ENCODE measurements at regions of chr11 and their contacts with region 1.

Region 1: DNA sequence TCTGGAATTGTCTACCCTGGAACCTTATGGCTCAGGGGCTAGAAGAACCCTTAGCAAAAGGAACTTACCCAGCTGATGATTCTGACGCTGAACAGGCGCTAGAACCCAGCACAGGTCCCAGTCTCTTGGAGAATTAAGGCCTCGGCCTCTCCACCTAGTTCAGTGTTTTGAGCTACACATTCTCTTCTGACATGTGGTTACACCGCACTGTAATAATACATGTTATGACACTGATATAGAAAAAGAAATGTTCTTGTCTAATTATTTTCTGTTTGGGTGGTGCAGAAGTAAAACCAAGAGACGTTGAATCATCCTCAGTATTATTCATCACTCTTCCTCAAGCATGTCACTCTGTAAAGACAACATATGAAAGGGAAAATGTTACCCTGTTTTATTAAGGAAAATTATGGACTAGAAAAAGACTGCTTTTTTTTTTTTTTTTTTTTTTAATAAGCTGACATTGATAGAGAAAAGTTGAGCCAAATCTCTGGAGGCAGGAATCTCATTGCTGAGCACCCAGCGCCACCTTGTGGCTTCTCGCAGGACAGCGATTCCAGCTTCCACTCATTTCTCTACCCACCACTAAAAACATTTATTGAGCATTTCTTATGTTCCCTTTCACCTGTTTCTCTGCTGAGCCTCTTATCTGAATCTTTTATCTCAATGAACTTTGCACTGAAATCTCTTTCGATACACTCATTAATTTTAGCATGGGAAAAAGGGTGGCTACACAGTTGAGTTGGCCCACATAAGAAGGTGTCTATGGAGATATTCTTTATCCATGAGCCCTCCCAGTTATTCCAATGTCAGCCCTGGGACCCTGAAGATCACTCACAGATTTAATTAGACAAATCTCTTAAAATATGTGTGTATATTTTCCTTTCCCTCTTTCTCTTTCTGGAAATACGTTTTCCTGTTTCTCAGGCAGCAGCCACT is 12.6 kb upstream of the APLNR start:
- DNase-seq: no peak
- H3K4me3 ChIP-seq: peak overlapping the region in 1 of 2 experiments; percentile 21; a peak in 1 of 4 replicates
- H3K27ac ChIP-seq: peak overlapping the region in 1 of 2 experiments; percentile 94; a peak in 2 of 4 replicates
- H3K4me1 ChIP-seq: peaks cover 0 to 15% of the 10 kb centered on the region in 2 experiments; a peak in 1 of 4 replicates
- H3K27me3 ChIP-seq: no peaks in the 10 kb centered on the region; the same call in 1 of the 2 replicates
- CTCF ChIP-seq: peak; percentile 89
- EP300 ChIP-seq: no peak
- RAD21 ChIP-seq: peak; percentile 96

Region 2: GRCh38 chr11:56841210-56841810 is 408.3 kb before region 1 on chr11:
- CTCF ChIA-PET with region 1: interaction called, 491 read pairs
- POLR2A ChIA-PET with region 1: interaction called, 3 read pairs
- DNase-seq: peak; percentile 60
- H3K4me3 ChIP-seq: no peak overlapping the region; a peak in 1 of 4 replicates
- H3K27ac ChIP-seq: peak overlapping the region in 1 of 2 experiments; percentile 94; a peak in 2 of 4 replicates
- H3K4me1 ChIP-seq: peaks cover 0 to 4% of the 10 kb centered on the region in 2 experiments; a peak in 2 of 4 replicates
- H3K27me3 ChIP-seq: no peaks in the 10 kb centered on the region
- CTCF ChIP-seq: peak; percentile 79
- EP300 ChIP-seq: no peak
- RAD21 ChIP-seq: peak; percentile 96

Region 3: DNA sequence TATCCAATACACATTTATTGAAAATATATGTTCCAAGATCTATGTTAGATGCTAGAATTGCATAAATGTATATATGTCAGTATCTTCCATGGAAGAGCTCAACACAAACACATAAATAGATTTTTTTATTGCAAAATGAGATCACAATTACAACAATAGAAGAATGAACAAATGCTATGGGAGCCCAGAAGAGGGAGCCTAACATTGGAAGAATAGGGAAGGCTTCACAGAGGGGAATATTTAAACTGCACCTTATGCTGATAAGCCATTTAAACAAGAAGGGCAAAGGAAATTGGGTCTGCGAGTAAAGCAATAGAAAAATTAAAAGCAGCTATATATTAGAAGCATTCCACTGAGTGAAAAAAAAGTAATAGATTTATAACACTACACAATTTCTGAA is 164.0 kb before region 1 on chr11:
- CTCF ChIA-PET with region 1: interaction called, 10 read pairs
- POLR2A ChIA-PET with region 1: no interaction called
- DNase-seq: no peak
- H3K4me3 ChIP-seq: no peak overlapping the region
- H3K27ac ChIP-seq: no peak overlapping the region
- H3K4me1 ChIP-seq: no peaks in the 10 kb centered on the region
- H3K27me3 ChIP-seq: no peaks in the 10 kb centered on the region; the same call in 1 of the 2 replicates
- CTCF ChIP-seq: peak; percentile 44
- EP300 ChIP-seq: no peak
- RAD21 ChIP-seq: peak; percentile 47

Region 4: GRCh38 chr11:57131080-57131790 is 118.4 kb before region 1 on chr11:
- CTCF ChIA-PET with region 1: interaction called, 128 read pairs
- POLR2A ChIA-PET with region 1: no interaction called
- DNase-seq: peak; percentile 25
- H3K4me3 ChIP-seq: peak overlapping the region in 1 of 2 experiments; percentile 54; a peak in 1 of 4 replicates
- H3K27ac ChIP-seq: peak overlapping the region in 1 of 2 experiments; percentile 39; a peak in 1 of 4 replicates
- H3K4me1 ChIP-seq: peaks cover 0 to 3% of the 10 kb centered on the region in 2 experiments; a peak in 1 of 4 replicates
- H3K27me3 ChIP-seq: no peaks in the 10 kb centered on the region
- CTCF ChIP-seq: peak; percentile 52
- EP300 ChIP-seq: no peak
- RAD21 ChIP-seq: peak; percentile 88

Region 5: GRCh38 chr11:57167125-57167846 is 82.4 kb before region 1 on chr11:
- CTCF ChIA-PET with region 1: interaction called, 15 read pairs
- POLR2A ChIA-PET with region 1: interaction called, 8 read pairs
- DNase-seq: peak; percentile 77
- H3K4me3 ChIP-seq: no peak overlapping the region
- H3K27ac ChIP-seq: peak overlapping the region in 1 of 2 experiments; percentile 95; a peak in 2 of 4 replicates
- H3K4me1 ChIP-seq: peaks cover 0 to 8% of the 10 kb centered on the region in 2 experiments; a peak in 2 of 4 replicates
- H3K27me3 ChIP-seq: no peaks in the 10 kb centered on the region
- CTCF ChIP-seq: no peak
- EP300 ChIP-seq: peak in 1 of 2 experiments; percentile 96; a peak in 2 of 4 replicates
- RAD21 ChIP-seq: peak; percentile 38

Region 6: GRCh38 chr11:57260937-57261783 is 11.5 kb after region 1 on chr11:
- CTCF ChIA-PET with region 1: interaction called, 28 read pairs
- POLR2A ChIA-PET with region 1: no interaction called
- DNase-seq: no peak
- H3K4me3 ChIP-seq: no peak overlapping the region
- H3K27ac ChIP-seq: no peak overlapping the region
- H3K4me1 ChIP-seq: no peaks in the 10 kb centered on the region
- H3K27me3 ChIP-seq: no peaks in the 10 kb centered on the region
- CTCF ChIP-seq: no peak
- EP300 ChIP-seq: no peak
- RAD21 ChIP-seq: no peak

Region 7: GRCh38 chr11:57287884-57288283 is 38.2 kb after region 1 on chr11:
- CTCF ChIA-PET with region 1: no interaction called
- POLR2A ChIA-PET with region 1: no interaction called
- DNase-seq: no peak
- H3K4me3 ChIP-seq: no peak overlapping the region
- H3K27ac ChIP-seq: no peak overlapping the region
- H3K4me1 ChIP-seq: peaks cover 4 to 7% of the 10 kb centered on the region in 2 experiments; a peak in 2 of 4 replicates
- H3K27me3 ChIP-seq: no peaks in the 10 kb centered on the region
- CTCF ChIP-seq: no peak
- EP300 ChIP-seq: no peak
- RAD21 ChIP-seq: no peak

Region 8: DNA sequence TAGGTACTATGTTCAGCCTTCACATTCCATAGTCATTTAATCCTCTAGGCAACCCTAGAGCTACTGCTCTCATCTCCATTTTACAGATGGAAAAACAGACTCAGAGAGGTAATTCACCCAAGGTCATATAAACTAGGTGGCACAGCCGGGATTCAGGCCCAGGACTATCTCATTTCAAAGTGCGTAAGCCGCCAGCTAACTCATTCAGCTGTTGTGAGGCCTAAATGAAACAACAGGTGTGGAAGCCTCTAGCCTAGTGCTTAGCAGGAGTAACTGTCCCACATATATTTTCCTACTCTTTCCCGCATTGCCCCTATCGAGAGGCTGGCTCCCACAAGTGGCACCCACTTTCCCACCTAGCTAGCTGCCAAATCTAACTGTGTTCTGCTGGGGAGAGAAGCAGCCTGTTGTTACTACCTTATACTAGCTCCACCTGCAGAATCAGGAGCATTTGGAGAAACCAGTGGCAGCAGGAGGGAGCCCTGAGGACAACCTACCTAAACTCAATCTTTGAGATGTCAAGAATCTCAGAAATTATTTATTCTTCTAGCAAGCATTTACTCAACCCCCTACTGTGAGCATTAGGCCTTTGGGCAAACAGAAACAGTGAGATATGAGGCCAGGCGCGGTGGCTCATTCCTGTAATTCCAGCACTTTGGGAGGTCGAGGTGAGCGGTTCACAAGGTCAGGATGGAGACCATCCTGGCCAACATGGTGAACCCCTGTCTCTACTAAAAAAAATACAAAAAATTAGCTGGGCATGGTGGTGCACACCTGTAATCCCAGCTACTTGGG is 110.4 kb after region 1 on chr11:
- CTCF ChIA-PET with region 1: no interaction called
- POLR2A ChIA-PET with region 1: no interaction called
- DNase-seq: no peak
- H3K4me3 ChIP-seq: no peak overlapping the region
- H3K27ac ChIP-seq: no peak overlapping the region
- H3K4me1 ChIP-seq: no peaks in the 10 kb centered on the region; a peak in 1 of 4 replicates
- H3K27me3 ChIP-seq: peaks cover 12% of the 10 kb centered on the region; the same call in 1 of the 2 replicates
- CTCF ChIP-seq: no peak
- EP300 ChIP-seq: no peak
- RAD21 ChIP-seq: no peak

Region 9: DNA sequence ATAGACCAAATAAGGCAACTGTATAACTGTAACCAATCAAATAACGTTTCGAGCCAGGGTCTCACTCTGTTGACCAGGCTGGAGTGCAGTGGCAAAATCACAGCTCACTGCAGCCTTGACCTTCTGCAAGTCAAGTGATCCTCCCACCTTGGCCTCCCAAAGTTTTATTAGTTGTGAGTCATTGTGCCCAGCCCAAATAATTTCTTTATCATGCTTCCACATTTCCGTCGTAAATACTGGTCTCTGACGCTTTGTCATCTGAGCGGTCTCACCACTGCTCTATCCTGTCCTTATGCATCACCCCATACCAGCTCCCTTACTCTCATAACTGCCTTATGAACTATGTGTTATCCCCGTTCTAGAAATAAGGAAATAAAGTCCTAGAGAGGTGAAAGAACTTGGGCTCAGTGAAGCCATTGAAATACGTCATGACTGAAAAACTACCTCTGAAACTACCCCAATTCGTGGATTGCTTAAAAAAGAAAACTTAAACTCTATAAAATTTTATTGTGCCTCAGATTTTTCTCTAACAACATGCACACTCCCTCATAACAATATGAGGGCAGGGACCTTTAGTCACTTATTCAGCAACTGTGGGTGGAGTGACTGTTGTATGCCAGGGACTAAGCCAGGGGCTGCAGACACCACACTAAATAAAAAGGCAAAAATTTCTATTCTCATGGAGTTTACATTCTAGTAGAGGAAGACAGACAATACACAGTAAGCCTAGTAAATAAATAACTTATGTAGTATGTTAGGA is 194.9 kb after region 1 on chr11:
- CTCF ChIA-PET with region 1: no interaction called
- POLR2A ChIA-PET with region 1: no interaction called
- DNase-seq: no peak
- H3K4me3 ChIP-seq: no peak overlapping the region
- H3K27ac ChIP-seq: no peak overlapping the region
- H3K4me1 ChIP-seq: no peaks in the 10 kb centered on the region
- H3K27me3 ChIP-seq: no peaks in the 10 kb centered on the region; the same call in 1 of the 2 replicates
- CTCF ChIP-seq: no peak
- EP300 ChIP-seq: no peak
- RAD21 ChIP-seq: no peak

Region 10: DNA sequence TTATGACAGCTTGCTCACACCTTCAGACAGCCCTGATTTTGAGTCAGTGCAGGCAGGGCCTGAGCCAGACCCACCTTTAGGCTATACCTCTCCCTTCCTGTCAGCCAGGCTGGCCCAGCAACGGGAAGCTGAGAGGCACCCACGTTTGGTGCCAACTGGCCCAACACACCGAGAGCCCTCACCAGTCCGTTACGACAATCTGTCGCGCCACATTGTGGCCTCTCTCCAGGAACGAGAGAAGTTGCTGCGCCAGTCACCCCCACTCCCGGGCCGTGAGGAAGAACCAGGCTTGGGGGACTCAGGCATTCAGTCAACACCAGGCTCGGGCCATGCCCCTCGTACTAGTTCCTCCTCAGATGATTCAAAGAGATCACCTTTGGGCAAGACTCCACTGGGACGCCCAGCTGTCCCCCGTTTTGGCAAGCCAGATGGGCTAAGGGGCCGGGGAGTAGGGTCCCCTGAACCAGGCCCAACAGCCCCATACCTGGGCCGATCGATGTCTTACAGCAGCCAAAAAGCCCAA is 449.3 kb after region 1 on chr11:
- CTCF ChIA-PET with region 1: no interaction called
- POLR2A ChIA-PET with region 1: no interaction called
- DNase-seq: no peak
- H3K4me3 ChIP-seq: no peak overlapping the region
- H3K27ac ChIP-seq: no peak overlapping the region
- H3K4me1 ChIP-seq: peaks cover 0 to 2% of the 10 kb centered on the region in 2 experiments; a peak in 1 of 4 replicates
- H3K27me3 ChIP-seq: no peaks in the 10 kb centered on the region
- CTCF ChIP-seq: no peak
- EP300 ChIP-seq: no peak
- RAD21 ChIP-seq: no peak

Measured in SK-N-SH (cell line).